ENCODE measurements at regions of chr15 and their contacts with region 1.

Region 1: DNA sequence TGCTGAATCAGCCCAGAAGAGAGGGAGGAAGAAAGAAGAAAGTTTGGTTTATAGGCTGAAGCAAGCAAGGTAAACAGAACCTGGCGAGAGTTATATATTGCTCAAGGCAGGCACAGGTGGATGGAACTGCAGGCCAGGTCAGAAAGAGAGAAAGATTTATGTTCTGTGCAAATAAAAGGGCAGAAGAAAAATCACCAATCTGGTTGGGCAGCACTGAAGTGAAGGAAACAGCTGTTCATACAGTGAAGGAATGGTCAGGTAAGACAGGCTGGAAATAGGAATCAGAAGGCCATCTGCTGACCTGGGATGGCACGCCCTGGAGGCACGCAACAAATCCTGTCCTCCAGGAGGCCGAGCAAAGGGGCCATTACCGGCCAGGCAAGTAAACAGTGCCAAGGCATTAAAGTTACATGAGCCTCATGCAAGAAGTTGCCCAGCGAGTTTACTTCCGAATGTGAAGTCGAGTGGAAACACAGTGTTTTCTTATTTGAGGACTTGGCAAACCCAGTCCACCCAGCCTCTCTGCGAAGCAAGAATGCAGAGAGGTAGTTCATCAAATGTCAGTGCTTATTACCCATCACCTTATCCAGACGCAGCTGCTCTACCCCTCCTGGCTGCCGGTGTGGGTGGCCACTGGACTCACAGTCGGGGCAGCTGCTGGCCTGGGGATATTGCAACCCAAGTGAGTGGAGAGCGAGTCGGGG is 309.7 kb downstream of the VPS13C start:
- DNase-seq: no peak
- H3K4me3 ChIP-seq: no peak overlapping the region
- H3K27ac ChIP-seq: no peak overlapping the region
- H3K4me1 ChIP-seq: no peaks in the 10 kb centered on the region
- H3K27me3 ChIP-seq: no peaks in the 10 kb centered on the region
- CTCF ChIP-seq: no peak

Region 2: DNA sequence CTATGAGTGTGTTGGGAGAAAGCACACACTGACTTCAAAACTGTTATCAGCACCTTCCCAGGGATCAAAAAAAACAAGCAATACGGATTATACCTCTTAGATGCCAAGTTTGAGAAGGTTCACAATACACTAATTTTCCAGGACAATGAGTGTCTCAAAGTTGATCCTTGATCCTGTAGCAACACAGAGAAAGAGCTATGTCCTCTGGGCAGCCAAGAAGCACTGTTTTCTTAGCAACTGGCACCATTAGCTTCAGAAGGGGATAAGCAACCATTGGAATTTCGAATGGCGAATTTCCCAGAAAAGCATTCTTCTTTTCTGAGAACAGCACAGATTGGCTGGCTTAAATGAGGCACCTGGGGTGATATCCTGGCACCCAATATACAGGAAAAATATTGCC is 251.2 kb before region 1 on chr15:
- CTCF ChIA-PET with region 1: no interaction called
- POLR2A ChIA-PET with region 1: no interaction called
- intact Hi-C with region 1: no loop called
- DNase-seq: no peak
- H3K4me3 ChIP-seq: no peak overlapping the region
- H3K27ac ChIP-seq: no peak overlapping the region
- H3K4me1 ChIP-seq: no peaks in the 10 kb centered on the region
- H3K27me3 ChIP-seq: peaks cover 10% of the 10 kb centered on the region
- CTCF ChIP-seq: no peak

Region 3: DNA sequence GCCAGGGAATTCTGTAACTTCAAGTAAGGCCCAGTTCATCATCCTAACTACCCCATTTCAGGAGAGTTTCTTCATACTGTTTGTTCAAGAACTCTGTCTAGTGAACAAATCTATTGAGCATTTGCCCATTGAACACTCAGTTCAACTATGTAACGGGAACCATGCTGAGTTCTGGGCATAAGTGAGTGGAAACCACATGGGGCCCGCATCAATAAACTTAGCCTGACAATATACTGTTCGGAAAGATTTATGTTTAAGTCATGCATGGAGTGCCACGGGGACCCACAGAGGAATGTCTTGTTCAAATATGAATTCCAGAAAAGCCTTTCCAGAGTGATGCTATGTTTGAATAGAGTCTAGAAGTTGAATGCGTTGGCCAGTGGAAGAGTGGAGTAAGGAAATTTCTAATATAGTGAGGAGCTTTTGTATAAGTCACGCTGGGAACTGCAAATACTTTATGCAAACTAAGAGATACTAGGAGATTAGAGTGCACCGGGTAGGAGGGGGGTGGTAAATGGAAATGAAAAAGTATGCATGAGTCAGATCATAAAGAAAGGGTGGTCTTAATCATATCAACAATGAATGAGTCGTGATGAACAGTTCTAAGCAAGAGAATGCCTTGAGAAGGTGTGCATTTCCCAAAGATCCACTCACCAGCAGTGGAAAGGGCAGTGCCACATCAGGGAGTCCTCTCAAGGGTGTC is 29.9 kb after region 1 on chr15:
- CTCF ChIA-PET with region 1: no interaction called
- POLR2A ChIA-PET with region 1: interaction called, 15 read pairs
- intact Hi-C with region 1: no loop called
- DNase-seq: peak; percentile 77
- H3K4me3 ChIP-seq: no peak overlapping the region
- H3K27ac ChIP-seq: no peak overlapping the region
- H3K4me1 ChIP-seq: peaks cover 21% of the 10 kb centered on the region
- H3K27me3 ChIP-seq: no peaks in the 10 kb centered on the region
- CTCF ChIP-seq: no peak

Measured in A673 (cell line).